Naive thymus-derived CD4-positive, alpha-beta T cell (primary cell): ENCODE measurements at regions of chr3 and their contacts with region 1.

Region 1: GRCh38 chr3:187919048-187919447 is 173.8 kb upstream of the BCL6 start:
- DNase-seq: peak in 8 of 9 donors; percentile 50 to 64 (median 60)
- ATAC-seq: peak; percentile 90
- H3K4me3 ChIP-seq: peak overlapping the region; percentile 48
- H3K4me3 Mint-ChIP-seq: peak overlapping the region; percentile 69 to 86 (median 81)
- H3K27ac ChIP-seq: peak overlapping the region; percentile 13
- H3K27ac Mint-ChIP-seq: peak overlapping the region; percentile 58 to 94 (median 90)
- H3K4me1 ChIP-seq: peaks cover 15 to 28% of the 10 kb centered on the region in 2 donors
- H3K4me1 Mint-ChIP-seq: peaks cover 34 to 80% (median 48%) of the 10 kb centered on the region in 7 donors
- H3K27me3 ChIP-seq: no peaks in the 10 kb centered on the region
- H3K27me3 Mint-ChIP-seq: peaks cover 0 to 10% (median 0%) of the 10 kb centered on the region in 5 donors

Region 2: GRCh38 chr3:187777331-187777941 is 141.6 kb before region 1 on chr3:
- CTCF ChIA-PET with region 1: no interaction called
- POLR2A ChIA-PET with region 1: no interaction called
- intact Hi-C with region 1: loop called (anchors 1 to 5 kb)
- DNase-seq: peak in 5 of 9 donors; percentile 14 to 31 (median 18)
- ATAC-seq: peak; percentile 86
- H3K4me3 ChIP-seq: peak overlapping the region; percentile 2
- H3K4me3 Mint-ChIP-seq: peak overlapping the region in 5 of 10 donors; percentile 1 to 64 (median 37)
- H3K27ac ChIP-seq: no peak overlapping the region
- H3K27ac Mint-ChIP-seq: peak overlapping the region in 7 of 9 donors; percentile 6 to 88 (median 56)
- H3K4me1 ChIP-seq: peaks cover 10 to 16% of the 10 kb centered on the region in 2 donors
- H3K4me1 Mint-ChIP-seq: peaks cover 14 to 63% (median 23%) of the 10 kb centered on the region in 7 donors
- H3K27me3 ChIP-seq: no peaks in the 10 kb centered on the region
- H3K27me3 Mint-ChIP-seq: no peaks in the 10 kb centered on the region

Region 3: GRCh38 chr3:187943679-187944390 is 24.8 kb after region 1 on chr3:
- CTCF ChIA-PET with region 1: no interaction called
- POLR2A ChIA-PET with region 1: no interaction called
- intact Hi-C with region 1: loop called in 1 of 2 experiments (anchors 1 kb)
- DNase-seq: no peak
- ATAC-seq: no peak
- H3K4me3 ChIP-seq: no peak overlapping the region
- H3K4me3 Mint-ChIP-seq: no peak overlapping the region
- H3K27ac ChIP-seq: no peak overlapping the region
- H3K27ac Mint-ChIP-seq: no peak overlapping the region
- H3K4me1 ChIP-seq: peaks cover 6 to 12% of the 10 kb centered on the region in 2 donors
- H3K4me1 Mint-ChIP-seq: peaks cover 0 to 8% (median 0%) of the 10 kb centered on the region in 7 donors
- H3K27me3 ChIP-seq: no peaks in the 10 kb centered on the region
- H3K27me3 Mint-ChIP-seq: peaks cover 0 to 10% (median 0%) of the 10 kb centered on the region in 5 donors

Region 4: GRCh38 chr3:187963677-187964385 is 44.8 kb after region 1 on chr3:
- CTCF ChIA-PET with region 1: no interaction called
- POLR2A ChIA-PET with region 1: no interaction called
- intact Hi-C with region 1: loop called in 1 of 2 experiments (anchors 5 kb)
- DNase-seq: no peak
- ATAC-seq: peak; percentile 61
- H3K4me3 ChIP-seq: no peak overlapping the region
- H3K4me3 Mint-ChIP-seq: no peak overlapping the region
- H3K27ac ChIP-seq: no peak overlapping the region
- H3K27ac Mint-ChIP-seq: peak overlapping the region in 2 of 9 donors; percentile 16 to 44
- H3K4me1 ChIP-seq: peaks cover 7 to 20% of the 10 kb centered on the region in 2 donors
- H3K4me1 Mint-ChIP-seq: peaks cover 2 to 11% (median 9%) of the 10 kb centered on the region in 7 donors
- H3K27me3 ChIP-seq: no peaks in the 10 kb centered on the region
- H3K27me3 Mint-ChIP-seq: peaks cover 0 to 5% (median 0%) of the 10 kb centered on the region in 5 donors

Region 5: GRCh38 chr3:188000361-188000861 is 81.4 kb after region 1 on chr3:
- CTCF ChIA-PET with region 1: no interaction called
- POLR2A ChIA-PET with region 1: no interaction called
- intact Hi-C with region 1: loop called in 1 of 2 experiments (anchors 1 kb)
- DNase-seq: no peak
- ATAC-seq: no peak
- H3K4me3 ChIP-seq: peak overlapping the region; percentile 13
- H3K4me3 Mint-ChIP-seq: peak overlapping the region; percentile 42 to 83 (median 77)
- H3K27ac ChIP-seq: no peak overlapping the region
- H3K27ac Mint-ChIP-seq: peak overlapping the region; percentile 27 to 94 (median 85)
- H3K4me1 ChIP-seq: peaks cover 26 to 37% of the 10 kb centered on the region in 2 donors
- H3K4me1 Mint-ChIP-seq: peaks cover 41 to 75% (median 64%) of the 10 kb centered on the region in 7 donors
- H3K27me3 ChIP-seq: no peaks in the 10 kb centered on the region
- H3K27me3 Mint-ChIP-seq: no peaks in the 10 kb centered on the region

Region 6: GRCh38 chr3:188320757-188321156 is 401.7 kb after region 1 on chr3:
- CTCF ChIA-PET with region 1: no interaction called
- POLR2A ChIA-PET with region 1: no interaction called
- intact Hi-C with region 1: loop called in 1 of 2 experiments (anchors 5 kb)
- DNase-seq: no peak
- ATAC-seq: no peak
- H3K4me3 ChIP-seq: no peak overlapping the region
- H3K4me3 Mint-ChIP-seq: peak overlapping the region in 1 of 10 donors; percentile 37
- H3K27ac ChIP-seq: no peak overlapping the region
- H3K27ac Mint-ChIP-seq: peak overlapping the region in 2 of 9 donors; percentile 11 to 59
- H3K4me1 ChIP-seq: peaks cover 19 to 26% of the 10 kb centered on the region in 2 donors
- H3K4me1 Mint-ChIP-seq: peaks cover 34 to 67% (median 55%) of the 10 kb centered on the region in 7 donors
- H3K27me3 ChIP-seq: no peaks in the 10 kb centered on the region
- H3K27me3 Mint-ChIP-seq: peaks cover 0 to 6% (median 0%) of the 10 kb centered on the region in 5 donors

Region 7: DNA sequence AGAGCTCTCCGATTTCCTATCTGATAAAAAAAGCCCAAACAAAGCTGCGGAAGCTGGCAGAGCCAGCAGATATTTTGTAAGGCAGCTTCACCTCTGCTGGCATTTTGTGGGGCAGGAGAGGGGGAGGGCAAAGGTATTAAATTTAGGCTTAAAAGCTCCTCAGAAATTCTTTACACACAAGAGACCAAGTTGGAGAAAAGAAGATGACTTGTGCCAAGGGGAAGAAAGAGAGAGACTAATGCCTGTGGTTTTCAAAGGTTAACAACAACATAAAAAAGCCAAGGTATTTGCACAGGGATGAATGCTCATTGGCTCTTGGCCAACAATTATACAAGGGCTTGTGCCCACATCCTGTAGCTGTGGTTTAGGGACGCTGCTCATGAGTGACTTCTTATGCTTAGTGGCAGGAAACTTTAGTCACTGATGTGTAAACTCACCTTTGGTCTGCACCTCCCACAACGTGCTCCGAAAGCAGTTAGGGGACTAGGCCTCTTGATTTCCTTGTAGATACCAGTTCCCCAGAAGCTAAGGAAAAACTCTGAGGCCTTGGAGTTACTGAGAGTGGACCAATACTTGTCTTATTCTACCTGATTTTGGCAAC is 1405.6 kb after region 1 on chr3:
- CTCF ChIA-PET with region 1: no interaction called
- POLR2A ChIA-PET with region 1: no interaction called
- intact Hi-C with region 1: loop called in 1 of 2 experiments (anchors 10 kb)
- DNase-seq: peak; percentile 15 to 96 (median 94)
- ATAC-seq: peak; percentile 98
- H3K4me3 ChIP-seq: peak overlapping the region; percentile 21
- H3K4me3 Mint-ChIP-seq: peak overlapping the region; percentile 72 to 87 (median 82)
- H3K27ac ChIP-seq: peak overlapping the region; percentile 51
- H3K27ac Mint-ChIP-seq: peak overlapping the region; percentile 86 to 100 (median 94)
- H3K4me1 ChIP-seq: peaks cover 33 to 46% of the 10 kb centered on the region in 2 donors
- H3K4me1 Mint-ChIP-seq: peaks cover 27 to 80% (median 73%) of the 10 kb centered on the region in 7 donors
- H3K27me3 ChIP-seq: no peaks in the 10 kb centered on the region
- H3K27me3 Mint-ChIP-seq: peaks cover 0 to 4% (median 0%) of the 10 kb centered on the region in 5 donors